Naive thymus-derived CD8-positive, alpha-beta T cell (primary cell): ENCODE measurements at regions of chr1 and their contacts with region 1.

Region 1: DNA sequence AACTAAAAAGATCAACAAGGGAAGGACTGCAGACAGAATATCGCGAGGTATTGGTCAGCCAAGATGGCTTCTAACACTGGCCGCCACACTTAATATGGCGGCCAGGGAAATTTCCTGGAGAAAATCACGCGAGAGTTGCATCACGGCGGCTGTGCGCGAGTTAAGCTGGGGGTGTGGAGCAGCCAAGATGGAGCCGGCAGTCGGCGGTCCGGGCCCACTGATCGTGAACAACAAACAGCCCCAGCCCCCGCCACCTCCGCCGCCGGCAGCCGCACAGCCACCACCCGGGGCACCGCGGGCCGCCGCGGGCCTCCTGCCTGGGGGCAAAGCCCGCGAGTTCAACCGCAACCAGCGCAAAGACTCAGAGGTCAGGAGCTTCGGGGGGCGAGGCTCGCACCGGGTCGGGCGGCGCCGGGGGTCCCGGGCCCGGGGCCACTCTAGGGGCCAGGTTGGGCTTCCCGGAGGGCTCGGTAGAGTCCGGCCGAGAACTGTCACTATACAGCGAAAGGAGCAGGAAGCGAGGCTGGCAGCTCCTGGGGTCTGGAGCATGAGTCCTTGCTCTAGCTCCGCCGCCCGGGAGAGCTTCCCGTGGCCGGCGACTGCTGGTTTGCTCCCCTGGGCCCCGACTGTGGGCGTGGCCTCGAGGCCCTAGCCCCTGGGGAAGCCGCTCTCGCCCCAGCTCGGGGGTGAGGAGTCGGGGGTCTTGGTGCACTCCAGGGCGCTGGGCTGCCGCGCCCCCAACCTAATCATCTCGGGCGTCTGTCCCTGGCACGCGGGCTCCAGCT is at the start of gene STRIP1:
- DNase-seq: peak; percentile 83 to 97 (median 93)
- ATAC-seq: peak; percentile 94 to 96
- H3K4me3 Mint-ChIP-seq: peak within 1 kb of the TSS; percentile 77 to 98 (median 96)
- H3K27ac Mint-ChIP-seq: peak within 1 kb of the TSS; percentile 88 to 98 (median 97)
- H3K4me1 Mint-ChIP-seq: peaks cover 11 to 61% (median 41%) of the 10 kb centered on the region in 4 donors
- H3K27me3 Mint-ChIP-seq: no peaks in the 10 kb centered on the region
- polyA plus RNA-seq, gene STRIP1: 17.8 to 26.8 (median 18.7) TPM

Region 2: GRCh38 chr1:110048923-110049601 is 14.4 kb after region 1 on chr1:
- POLR2A ChIA-PET with region 1: interaction called, 23 read pairs
- DNase-seq: no peak
- ATAC-seq: peak in 1 of 2 donors; percentile 30
- H3K4me3 Mint-ChIP-seq: no peak overlapping the region
- H3K27ac Mint-ChIP-seq: peak overlapping the region in 1 of 10 donors; percentile 4
- H3K4me1 Mint-ChIP-seq: peaks cover 0 to 12% (median 4%) of the 10 kb centered on the region in 4 donors
- H3K27me3 Mint-ChIP-seq: no peaks in the 10 kb centered on the region